Adrenal gland (tissue), 19 donors: ENCODE measurements at regions of chr9 and their contacts with region 1.

Region 1: GRCh38 chr9:4842734-4843133 is 50.0 kb downstream of the RCL1 start:
- DNase-seq: no peak
- H3K4me3 ChIP-seq: no peak overlapping the region
- H3K27ac ChIP-seq: no peak overlapping the region
- H3K4me1 ChIP-seq: no peaks in the 10 kb centered on the region
- H3K27me3 ChIP-seq: no peaks in the 10 kb centered on the region
- CTCF ChIP-seq: no peak
- POLR2A ChIP-seq: no peak

Region 2: GRCh38 chr9:4590430-4591122 is 252.2 kb before region 1 on chr9:
- intact Hi-C with region 1: loop called in 1 of 2 experiments (anchors 5 kb)
- DNase-seq: no peak
- H3K4me3 ChIP-seq: no peak overlapping the region
- H3K27ac ChIP-seq: no peak overlapping the region
- H3K4me1 ChIP-seq: no peaks in the 10 kb centered on the region
- H3K27me3 ChIP-seq: no peaks in the 10 kb centered on the region
- CTCF ChIP-seq: no peak
- POLR2A ChIP-seq: no peak